ENCODE measurements at regions of chr1 and their contacts with region 1.

Region 1: DNA sequence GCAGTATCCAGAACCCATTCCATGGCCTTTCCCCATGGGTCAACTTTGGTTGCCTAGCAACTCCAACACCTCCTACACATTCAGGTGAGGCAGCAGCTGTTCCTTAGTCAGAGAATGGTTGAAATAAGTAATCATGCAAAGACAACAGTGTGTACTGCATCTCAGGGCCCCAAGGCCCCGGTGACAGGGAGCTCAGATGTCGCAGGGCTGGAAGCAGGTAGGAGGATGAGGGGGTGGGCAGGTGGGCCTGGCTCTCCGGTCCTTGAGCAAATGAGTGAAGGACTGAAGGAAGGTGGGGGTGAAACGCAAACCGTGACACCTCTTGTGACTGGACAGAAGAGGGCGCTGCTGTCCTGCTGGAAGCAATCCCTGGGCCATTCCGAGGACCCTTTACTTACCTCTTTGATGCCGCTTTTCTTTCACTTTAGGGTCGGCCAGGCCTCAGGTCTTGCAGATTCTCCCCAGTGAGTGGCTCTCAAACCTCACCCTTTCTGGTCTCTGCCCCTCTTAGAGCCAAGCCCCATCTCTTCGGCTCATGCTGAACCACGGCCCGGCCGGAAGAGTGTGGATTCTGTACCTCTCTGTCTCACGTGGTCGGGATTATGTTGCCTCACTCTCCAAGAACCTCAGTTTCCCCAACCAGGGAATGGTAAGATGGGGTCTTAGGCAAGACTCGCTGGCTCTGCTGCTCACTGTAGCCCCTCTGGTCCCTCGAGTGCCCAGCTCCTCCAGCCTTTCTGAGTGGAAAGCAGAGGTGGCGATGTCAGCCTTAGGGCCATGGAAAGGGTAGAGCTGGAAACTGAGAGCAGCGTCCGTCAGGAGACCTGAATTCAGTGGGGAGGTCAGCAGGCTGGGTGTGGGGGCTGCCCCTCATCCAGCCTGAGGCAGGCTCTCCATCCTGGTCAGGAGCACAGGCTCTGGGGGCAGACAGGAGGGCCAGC is 5.6 kb upstream of the KCNA10 start:
- DNase-seq: peak; percentile 25 to 46 (median 29)
- H3K4me3 ChIP-seq: no peak overlapping the region
- H3K4me3 Mint-ChIP-seq: peak overlapping the region in 1 of 2 donors; percentile 5
- H3K27ac ChIP-seq: no peak overlapping the region
- H3K27ac Mint-ChIP-seq: no peak overlapping the region
- H3K4me1 ChIP-seq: peaks cover 0 to 3% of the 10 kb centered on the region in 2 donors
- H3K4me1 Mint-ChIP-seq: peaks cover 7% of the 10 kb centered on the region
- H3K27me3 ChIP-seq: no peaks in the 10 kb centered on the region
- H3K27me3 Mint-ChIP-seq: peaks cover 15 to 29% (median 28%) of the 10 kb centered on the region in 3 donors
- CTCF ChIP-seq: peak; percentile 73

Region 2: GRCh38 chr1:110780600-110781484 is 256.3 kb after region 1 on chr1:
- intact Hi-C with region 1: loop called (anchors 1 to 2 kb)
- DNase-seq: peak; percentile 74 to 81 (median 81)
- H3K4me3 ChIP-seq: no peak overlapping the region
- H3K4me3 Mint-ChIP-seq: peak overlapping the region in 1 of 2 donors; percentile 43
- H3K27ac ChIP-seq: no peak overlapping the region
- H3K27ac Mint-ChIP-seq: peak overlapping the region in 1 of 7 donors; percentile 48
- H3K4me1 ChIP-seq: peaks cover 4% of the 10 kb centered on the region in 2 donors
- H3K4me1 Mint-ChIP-seq: peaks cover 10% of the 10 kb centered on the region
- H3K27me3 ChIP-seq: no peaks in the 10 kb centered on the region
- H3K27me3 Mint-ChIP-seq: peaks cover 0 to 7% (median 5%) of the 10 kb centered on the region in 3 donors
- CTCF ChIP-seq: peak; percentile 84